AG04449 (cell line): ENCODE measurements at regions of chr13 and their contacts with region 1.

Region 1: DNA sequence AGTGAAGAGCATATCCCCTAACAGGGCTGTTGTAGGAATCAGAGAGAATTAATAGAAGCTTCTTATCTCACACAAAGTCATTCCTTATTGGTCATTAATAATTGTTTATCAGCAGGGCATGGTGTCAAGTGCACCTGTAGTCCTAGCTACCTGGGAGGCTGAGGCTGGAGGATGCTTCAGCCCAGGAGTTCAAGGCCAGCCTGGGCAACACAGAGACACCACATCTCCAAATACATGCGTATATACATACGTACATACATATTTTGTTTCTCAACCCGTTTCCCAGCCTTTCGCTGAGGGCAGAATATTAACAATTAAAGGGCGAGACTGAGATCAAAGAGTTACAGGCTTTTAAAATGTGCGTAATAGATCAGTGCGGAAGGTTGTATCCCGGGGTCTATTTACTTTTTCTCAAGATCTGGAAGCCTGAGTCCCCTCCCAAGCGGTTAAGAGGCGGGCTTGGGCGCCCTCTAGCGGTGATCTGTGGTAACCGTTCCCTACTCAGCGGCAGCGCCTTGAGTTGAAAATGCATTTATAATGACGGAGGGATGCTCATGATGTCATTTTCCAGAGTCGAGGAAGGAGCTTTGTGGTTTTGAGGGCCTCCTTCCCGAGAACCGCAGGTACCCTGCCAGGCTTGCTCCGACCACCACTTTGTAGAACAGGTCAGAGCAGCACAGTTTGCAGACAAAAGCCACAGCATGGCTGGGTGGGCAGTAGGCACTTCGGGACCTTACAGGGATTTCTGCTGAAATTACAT is 169.6 kb upstream of the GPR12 start:
- DNase-seq: no peak
- H3K4me3 ChIP-seq: no peak overlapping the region; the same call in 1 of the 2 replicates
- CTCF ChIP-seq: peak; percentile 83

Region 2: DNA sequence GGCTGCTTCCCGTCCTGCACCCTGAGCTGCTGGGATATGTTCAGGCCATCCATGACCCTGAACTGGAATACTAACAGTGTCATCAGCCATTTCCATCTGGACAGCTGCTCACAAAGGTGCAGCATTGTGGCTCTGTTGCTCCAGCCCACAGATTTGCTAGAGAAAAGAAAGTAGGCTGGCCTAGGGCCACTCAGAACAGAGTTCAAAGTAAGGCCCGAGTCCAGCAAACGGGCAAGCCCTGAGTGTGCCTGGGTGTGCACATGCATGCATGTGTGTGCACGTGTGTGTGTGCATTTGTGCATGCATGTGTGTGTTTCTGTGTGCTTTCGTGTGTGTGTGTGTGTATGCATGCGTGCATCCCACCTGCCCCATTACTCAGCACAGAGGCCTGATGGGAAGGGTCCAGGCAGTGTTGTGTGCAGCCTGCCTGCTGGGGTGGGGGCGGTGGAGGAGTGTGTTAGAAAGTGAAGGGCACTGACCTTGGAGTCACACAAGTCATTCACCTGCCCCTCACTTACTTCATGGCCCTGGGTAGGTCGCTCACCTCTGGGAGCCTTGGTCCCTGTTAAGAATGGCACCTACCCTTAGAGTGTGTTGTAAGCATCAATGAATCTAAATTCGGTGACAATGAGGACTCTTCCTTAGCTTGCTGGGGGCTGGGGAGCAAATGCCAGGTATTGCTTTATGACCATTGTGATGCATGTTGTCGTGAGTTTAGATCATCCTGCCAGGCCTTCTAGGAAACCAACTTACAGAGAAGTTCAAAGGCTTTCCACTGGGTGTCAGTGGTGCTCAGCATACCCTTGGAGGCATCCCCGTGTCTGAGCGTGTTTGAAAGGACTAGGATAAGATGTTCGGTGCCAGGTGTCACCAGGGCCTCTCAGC is 222.8 kb before region 1 on chr13:
- CTCF ChIA-PET with region 1: interaction called, 63 read pairs
- POLR2A ChIA-PET with region 1: no interaction called
- DNase-seq: no peak
- H3K4me3 ChIP-seq: no peak overlapping the region
- CTCF ChIP-seq: peak; percentile 67

Region 3: DNA sequence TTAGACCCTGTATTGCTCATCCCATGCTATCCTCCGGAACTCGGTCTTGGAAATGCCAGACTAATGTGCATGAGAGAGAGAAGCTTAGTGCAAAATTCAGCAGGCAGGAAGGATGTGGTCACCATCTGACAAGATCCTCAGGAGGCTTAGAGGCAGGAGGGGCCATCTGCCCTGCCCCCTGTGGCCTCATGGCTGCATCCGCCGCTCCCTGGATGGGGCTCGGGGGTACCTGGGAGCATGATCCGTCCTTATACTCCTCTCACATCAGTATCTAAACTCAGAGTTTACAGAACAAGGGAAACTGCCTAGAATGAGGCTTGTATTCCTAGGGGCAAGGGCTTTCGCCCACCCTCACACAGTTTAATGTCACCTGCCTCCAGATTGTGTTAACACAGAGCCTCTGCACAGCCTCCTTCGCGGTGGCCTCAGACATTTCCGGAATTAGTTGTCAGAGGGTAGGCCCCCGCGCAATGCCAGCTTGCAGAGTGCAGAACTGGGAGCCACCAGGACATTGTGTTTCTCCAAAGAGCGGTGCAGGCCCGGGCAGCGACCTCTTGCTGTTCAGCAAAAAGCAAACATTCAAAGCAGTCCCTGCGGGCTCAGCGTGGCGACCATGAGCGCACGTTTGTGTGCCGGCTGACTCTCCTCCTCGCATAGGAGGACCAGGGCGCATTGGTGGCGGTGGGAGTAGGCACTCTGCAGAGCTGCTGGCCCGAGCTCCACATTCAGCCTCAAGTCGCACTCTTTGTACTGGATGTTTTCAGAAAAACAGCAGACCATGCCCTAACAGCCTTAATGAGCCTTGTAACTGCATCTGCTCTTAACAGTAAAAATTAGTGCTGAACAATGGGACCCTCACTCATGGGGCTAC is 208.7 kb before region 1 on chr13:
- CTCF ChIA-PET with region 1: interaction called, 13 read pairs
- POLR2A ChIA-PET with region 1: no interaction called
- DNase-seq: no peak
- H3K4me3 ChIP-seq: no peak overlapping the region
- CTCF ChIP-seq: no peak

Region 4: GRCh38 chr13:26914624-26915023 is 15.5 kb before region 1 on chr13:
- CTCF ChIA-PET with region 1: interaction called, 19 read pairs
- POLR2A ChIA-PET with region 1: no interaction called
- DNase-seq: no peak
- H3K4me3 ChIP-seq: no peak overlapping the region
- CTCF ChIP-seq: no peak

Region 5: GRCh38 chr13:26941345-26942174 is 11.4 kb after region 1 on chr13:
- CTCF ChIA-PET with region 1: interaction called, 33 read pairs
- POLR2A ChIA-PET with region 1: no interaction called
- DNase-seq: peak; percentile 45
- H3K4me3 ChIP-seq: no peak overlapping the region
- CTCF ChIP-seq: no peak

Region 6: GRCh38 chr13:26946684-26947343 is 16.7 kb after region 1 on chr13:
- CTCF ChIA-PET with region 1: interaction called, 33 read pairs
- POLR2A ChIA-PET with region 1: no interaction called
- DNase-seq: no peak
- H3K4me3 ChIP-seq: no peak overlapping the region
- CTCF ChIP-seq: peak; percentile 57